ENCODE measurements at regions of chr11 and their contacts with region 1.

Region 1: GRCh38 chr11:130223291-130223971 is 63.8 kb downstream of the ST14 start:
- DNase-seq: no peak

Region 2: GRCh38 chr11:129681344-129682114 is 541.9 kb before region 1 on chr11:
- in situ Hi-C with region 1: no loop called
- DNase-seq: no peak

Region 3: GRCh38 chr11:130300567-130300966 is 77.1 kb after region 1 on chr11:
- in situ Hi-C with region 1: loop called (anchors 10 kb)
- DNase-seq: no peak

Measured in KBM-7 (cell line).